ENCODE measurements at regions of chr5 and their contacts with region 1.

Region 1: DNA sequence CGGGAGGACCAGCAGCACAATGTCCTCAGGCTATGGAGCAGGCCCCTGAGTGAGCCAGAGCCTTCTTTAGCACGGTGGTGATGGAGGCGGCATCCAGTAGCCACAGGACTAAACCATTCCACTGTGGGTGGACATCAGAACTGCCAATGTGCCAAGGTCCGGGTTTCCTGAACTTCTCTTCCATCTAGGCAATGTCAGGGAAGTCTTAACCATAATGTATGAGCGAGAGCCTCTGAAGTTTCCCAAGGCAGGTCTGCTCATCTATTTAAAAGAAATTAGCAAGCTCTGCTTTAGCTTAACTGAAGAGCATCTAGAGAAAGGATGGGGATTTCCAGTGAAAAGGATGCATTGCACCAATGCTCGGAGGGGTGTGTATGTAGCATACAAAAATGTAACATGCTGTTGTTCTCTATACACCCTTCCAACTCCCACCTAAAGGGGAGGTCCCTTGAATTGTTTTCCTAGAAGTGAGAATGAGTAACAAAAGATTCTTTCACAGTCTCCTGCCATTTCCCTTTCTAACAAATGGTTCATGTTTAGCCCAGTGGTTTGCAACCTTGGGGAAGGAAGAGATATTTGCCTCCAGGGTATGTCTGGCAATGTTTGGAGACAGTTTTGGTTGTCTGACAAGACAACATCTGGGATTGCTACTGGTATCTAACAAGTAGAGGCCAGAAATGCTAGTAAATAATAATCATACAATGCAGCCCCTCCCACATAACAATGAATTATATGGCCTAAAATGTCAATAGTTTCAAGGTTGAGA is 6.1 kb upstream of the RXFP3 start:
- DNase-seq: no peak
- H3K4me3 Mint-ChIP-seq: no peak overlapping the region
- H3K27ac Mint-ChIP-seq: no peak overlapping the region
- H3K4me1 Mint-ChIP-seq: peaks cover 7% of the 10 kb centered on the region
- H3K27me3 Mint-ChIP-seq: peaks cover 11% of the 10 kb centered on the region
- CTCF ChIP-seq: no peak

Region 2: GRCh38 chr5:33470544-33470943 is 459.6 kb before region 1 on chr5:
- CTCF ChIA-PET with region 1: interaction called, 30 read pairs
- POLR2A ChIA-PET with region 1: no interaction called
- intact Hi-C with region 1: loop called (anchors 10 kb)
- DNase-seq: peak; percentile 33
- H3K4me3 Mint-ChIP-seq: no peak overlapping the region
- H3K27ac Mint-ChIP-seq: no peak overlapping the region
- H3K4me1 Mint-ChIP-seq: no peaks in the 10 kb centered on the region
- H3K27me3 Mint-ChIP-seq: no peaks in the 10 kb centered on the region
- CTCF ChIP-seq: no peak

Region 3: DNA sequence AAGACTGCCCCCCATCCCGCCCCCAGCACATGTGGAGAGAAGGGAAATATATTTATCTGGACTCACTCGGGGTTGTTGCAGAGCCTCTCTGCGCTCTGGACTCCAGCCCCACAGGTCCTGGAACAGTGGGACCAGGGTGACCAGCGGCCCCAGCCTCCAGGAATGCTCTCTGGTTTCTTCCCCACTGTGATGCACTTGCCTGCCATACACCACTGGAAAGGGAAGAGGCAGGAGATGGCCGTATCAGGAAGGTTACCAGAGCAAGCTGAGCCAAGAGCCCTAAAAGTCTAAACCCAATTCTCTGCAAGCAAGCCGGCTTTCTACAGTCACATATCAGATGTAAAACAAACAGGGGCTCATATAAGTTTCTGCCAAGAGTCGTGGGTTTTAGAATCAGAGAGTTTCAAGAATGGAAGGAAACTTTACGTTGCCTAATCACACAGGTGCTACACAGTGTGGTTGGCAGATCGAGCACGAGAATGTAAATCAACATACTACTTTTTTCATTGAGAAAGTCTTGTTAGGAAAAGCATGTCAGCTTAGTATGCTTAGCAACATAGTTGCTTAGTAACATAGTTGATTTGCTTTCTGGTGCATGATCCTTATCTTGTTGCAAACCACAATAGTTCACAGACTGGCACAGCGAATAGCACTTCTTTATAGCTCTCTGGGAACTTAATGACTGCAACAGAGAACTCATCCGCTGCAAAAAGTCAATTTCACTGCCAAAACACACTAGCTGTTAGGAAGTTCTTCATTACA is 288.2 kb before region 1 on chr5:
- CTCF ChIA-PET with region 1: no interaction called
- POLR2A ChIA-PET with region 1: no interaction called
- intact Hi-C with region 1: no loop called
- DNase-seq: no peak
- H3K4me3 Mint-ChIP-seq: no peak overlapping the region
- H3K27ac Mint-ChIP-seq: no peak overlapping the region
- H3K4me1 Mint-ChIP-seq: no peaks in the 10 kb centered on the region
- H3K27me3 Mint-ChIP-seq: peaks cover 16% of the 10 kb centered on the region
- CTCF ChIP-seq: no peak

Region 4: GRCh38 chr5:34062419-34062818 is 132.3 kb after region 1 on chr5:
- CTCF ChIA-PET with region 1: no interaction called
- POLR2A ChIA-PET with region 1: no interaction called
- intact Hi-C with region 1: no loop called
- DNase-seq: no peak
- H3K4me3 Mint-ChIP-seq: no peak overlapping the region
- H3K27ac Mint-ChIP-seq: no peak overlapping the region
- H3K4me1 Mint-ChIP-seq: peaks cover 5% of the 10 kb centered on the region
- H3K27me3 Mint-ChIP-seq: no peaks in the 10 kb centered on the region
- CTCF ChIP-seq: no peak

Measured in MCF 10A (cell line).